Naive thymus-derived CD4-positive, alpha-beta T cell (primary cell): ENCODE measurements at regions of chr6 and their contacts with region 1.

Region 1: DNA sequence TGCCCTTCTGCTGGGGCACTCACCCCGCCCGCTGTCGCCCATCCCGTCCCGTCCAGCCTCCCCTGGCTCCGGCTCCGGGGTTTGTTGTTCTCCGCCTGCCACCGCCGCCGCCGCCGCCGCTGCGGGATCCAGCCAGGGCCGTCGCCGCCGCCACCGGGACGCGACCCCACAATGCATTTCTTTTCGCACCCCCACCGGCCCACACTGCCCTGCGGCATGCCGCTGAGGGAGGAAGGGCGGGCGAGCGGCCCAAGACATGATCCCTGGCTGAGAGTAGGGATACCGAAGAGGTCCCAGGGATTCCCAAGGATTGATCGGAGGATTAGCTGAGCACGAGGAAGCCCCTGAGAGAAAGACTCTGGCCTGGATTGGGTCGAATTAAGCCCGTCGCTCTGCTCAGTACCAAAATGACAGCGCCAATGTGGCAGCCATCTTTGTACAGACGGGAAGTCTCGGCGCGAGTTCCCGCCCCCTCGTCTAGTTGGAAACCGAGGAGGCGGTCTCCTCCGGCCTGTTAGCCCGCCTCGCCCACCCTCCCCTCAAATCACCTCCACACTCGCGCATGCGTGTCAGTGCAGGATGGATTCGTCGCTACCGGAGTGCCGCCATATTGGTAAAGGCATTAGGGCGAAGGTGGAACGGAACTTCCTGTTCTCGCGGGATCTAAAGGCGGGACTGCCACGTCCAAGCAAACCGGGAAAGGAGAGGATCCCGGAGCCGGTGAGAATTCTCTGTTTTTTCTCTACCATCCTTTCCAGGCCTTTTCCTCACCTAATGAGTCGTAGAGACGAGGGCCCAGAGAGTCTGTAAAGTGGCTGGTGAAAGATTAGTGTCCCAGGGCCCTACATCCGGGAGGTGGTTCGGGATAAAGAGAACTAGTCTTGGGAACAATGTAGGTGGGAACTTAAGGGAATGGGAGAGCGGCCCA is at the starts of genes RXRB and SLC39A7:
- DNase-seq: peak; percentile 88 to 99 (median 97)
- ATAC-seq: peak; percentile 85
- H3K4me3 ChIP-seq: peak within 1 kb of the TSS; percentile 89
- H3K4me3 Mint-ChIP-seq: peak within 1 kb of the TSS; percentile 95 to 100 (median 99)
- H3K27ac ChIP-seq: peak within 1 kb of the TSS; percentile 96
- H3K27ac Mint-ChIP-seq: peak within 1 kb of the TSS; percentile 97 to 99 (median 99)
- H3K4me1 ChIP-seq: peaks cover 32 to 37% of the 10 kb centered on the region in 2 donors
- H3K4me1 Mint-ChIP-seq: peaks cover 62 to 84% (median 73%) of the 10 kb centered on the region in 7 donors
- H3K27me3 ChIP-seq: no peaks in the 10 kb centered on the region
- H3K27me3 Mint-ChIP-seq: no peaks in the 10 kb centered on the region
- total RNA-seq, gene RXRB: 50.3 to 103 (median 76.2) TPM
- total RNA-seq, gene SLC39A7: 19.1 to 51.9 (median 27.9) TPM

Region 2: DNA sequence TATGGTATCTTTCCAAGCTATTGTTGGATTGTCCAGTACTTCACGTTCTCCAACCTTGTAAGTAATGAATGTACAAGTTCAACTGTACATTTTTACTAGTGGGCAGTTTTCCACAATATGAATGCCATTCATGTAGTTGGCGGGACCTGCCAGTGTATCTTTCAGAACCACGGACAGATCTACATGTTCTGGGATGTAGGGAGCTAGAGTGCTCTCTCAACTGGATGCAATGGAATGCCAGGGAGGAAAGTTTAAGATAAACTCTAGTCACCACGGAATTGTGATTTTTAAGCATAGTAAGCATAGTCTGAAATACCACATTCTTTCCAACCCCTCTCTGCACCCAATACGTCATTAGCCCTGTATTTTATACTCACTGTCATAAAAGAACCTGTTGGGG is 1907.1 kb before region 1 on chr6:
- CTCF ChIA-PET with region 1: no interaction called
- POLR2A ChIA-PET with region 1: no interaction called
- intact Hi-C with region 1: no loop called
- DNase-seq: no peak
- ATAC-seq: no peak
- H3K4me3 ChIP-seq: no peak overlapping the region
- H3K4me3 Mint-ChIP-seq: no peak overlapping the region
- H3K27ac ChIP-seq: no peak overlapping the region
- H3K27ac Mint-ChIP-seq: no peak overlapping the region
- H3K4me1 ChIP-seq: no peaks in the 10 kb centered on the region
- H3K4me1 Mint-ChIP-seq: peaks cover 0 to 8% (median 3%) of the 10 kb centered on the region in 7 donors
- H3K27me3 ChIP-seq: no peaks in the 10 kb centered on the region
- H3K27me3 Mint-ChIP-seq: peaks cover 0 to 50% (median 20%) of the 10 kb centered on the region in 5 donors

Region 3: GRCh38 chr6:31665501-31666336 is 1534.8 kb before region 1 on chr6 and contains the start of gene CSNK2B:
- CTCF ChIA-PET with region 1: no interaction called
- POLR2A ChIA-PET with region 1: interaction called, 3 read pairs
- intact Hi-C with region 1: loop called in 1 of 2 experiments (anchors 10 kb)
- DNase-seq: peak; percentile 87 to 99 (median 98)
- ATAC-seq: peak; percentile 94
- H3K4me3 ChIP-seq: peak within 1 kb of the TSS; percentile 91
- H3K4me3 Mint-ChIP-seq: peak within 1 kb of the TSS; percentile 93 to 99 (median 96)
- H3K27ac ChIP-seq: peak within 1 kb of the TSS; percentile 97
- H3K27ac Mint-ChIP-seq: peak within 1 kb of the TSS; percentile 94 to 99 (median 98)
- H3K4me1 ChIP-seq: peaks cover 33 to 43% of the 10 kb centered on the region in 2 donors
- H3K4me1 Mint-ChIP-seq: peaks cover 25 to 75% (median 64%) of the 10 kb centered on the region in 7 donors
- H3K27me3 ChIP-seq: no peaks in the 10 kb centered on the region
- H3K27me3 Mint-ChIP-seq: peaks cover 0 to 2% (median 0%) of the 10 kb centered on the region in 5 donors
- total RNA-seq, gene CSNK2B: 101 to 215 (median 133) TPM

Region 4: DNA sequence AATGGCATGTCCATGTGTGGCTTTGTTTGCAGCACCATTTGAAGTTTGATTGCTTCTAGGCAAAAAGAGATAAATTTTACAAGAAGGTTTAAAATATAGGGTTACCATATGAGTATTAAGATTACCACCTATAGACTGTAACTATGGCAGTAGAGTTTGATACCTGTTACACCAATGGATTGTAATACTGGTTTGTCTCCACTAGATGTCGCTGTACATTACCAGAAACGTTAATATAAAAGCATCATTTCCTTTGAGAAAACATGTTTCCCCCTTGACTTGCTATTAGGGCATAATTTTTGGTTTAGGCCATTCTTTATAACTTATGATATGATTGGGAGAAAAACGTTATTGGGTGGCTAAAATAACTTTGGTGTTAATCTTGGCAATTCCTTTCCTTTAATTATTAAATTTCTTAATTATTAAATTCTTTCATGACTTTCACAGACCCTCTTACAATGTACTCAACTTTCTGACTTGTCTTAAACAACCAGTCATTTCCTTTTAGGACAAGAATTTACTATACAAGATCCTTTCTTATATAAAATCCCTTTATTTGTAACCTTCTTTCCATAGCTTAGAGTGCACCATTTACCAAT is 81.9 kb before region 1 on chr6:
- CTCF ChIA-PET with region 1: interaction called, 3 read pairs
- POLR2A ChIA-PET with region 1: no interaction called
- intact Hi-C with region 1: loop called (anchors 1 to 5 kb)
- DNase-seq: peak in 7 of 9 donors; percentile 44 to 75 (median 65)
- ATAC-seq: peak; percentile 85
- H3K4me3 ChIP-seq: no peak overlapping the region
- H3K4me3 Mint-ChIP-seq: peak overlapping the region in 1 of 10 donors; percentile 12
- H3K27ac ChIP-seq: no peak overlapping the region
- H3K27ac Mint-ChIP-seq: no peak overlapping the region
- H3K4me1 ChIP-seq: peaks cover 0 to 4% of the 10 kb centered on the region in 2 donors
- H3K4me1 Mint-ChIP-seq: peaks cover 4 to 21% (median 13%) of the 10 kb centered on the region in 7 donors
- H3K27me3 ChIP-seq: peaks cover 0 to 12% of the 10 kb centered on the region in 2 donors
- H3K27me3 Mint-ChIP-seq: peaks cover 40 to 79% (median 45%) of the 10 kb centered on the region in 5 donors

Region 5: DNA sequence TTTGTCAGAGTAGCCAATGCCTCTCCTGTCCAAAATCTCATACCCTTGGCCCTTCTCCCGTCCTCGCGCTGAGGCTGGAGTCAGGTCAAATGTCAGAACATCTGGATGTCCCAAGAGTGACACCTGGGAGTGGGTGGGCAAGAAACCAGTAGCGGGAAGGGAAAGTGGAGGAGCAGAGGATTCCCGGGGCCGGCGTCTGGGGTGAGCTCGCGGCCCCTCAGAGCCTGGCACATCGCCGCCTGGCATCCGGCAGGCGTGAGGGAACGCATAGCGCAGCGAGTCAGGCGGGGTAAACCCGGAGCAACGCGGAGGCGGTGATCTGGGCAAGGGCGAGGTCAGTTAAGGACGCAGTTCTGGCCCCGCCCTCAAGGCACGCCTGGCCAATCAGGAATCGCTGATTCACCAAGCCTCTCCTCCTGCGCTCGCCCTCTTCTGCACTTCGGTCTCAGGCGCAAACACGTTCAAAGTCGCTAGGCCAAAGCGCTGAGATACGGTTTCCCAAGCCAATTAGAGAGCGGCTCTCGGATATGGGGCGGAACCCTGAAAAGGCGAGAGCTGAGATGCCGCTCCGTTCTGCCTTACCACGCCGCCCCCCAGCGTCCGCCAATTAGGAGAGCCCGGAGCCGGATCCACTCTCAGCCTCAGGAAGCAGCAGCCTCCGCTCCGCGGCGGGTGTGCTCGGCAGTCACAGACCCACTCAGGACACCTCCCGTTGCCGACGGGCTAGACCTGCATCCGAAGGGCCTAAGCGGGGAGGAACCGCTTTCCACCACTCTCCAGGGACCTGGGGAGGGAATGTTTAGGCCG is 48.6 kb after region 1 on chr6:
- CTCF ChIA-PET with region 1: interaction called, 6 read pairs
- POLR2A ChIA-PET with region 1: interaction called, 14 read pairs
- intact Hi-C with region 1: loop called (anchors 1 kb)
- DNase-seq: peak; percentile 79 to 97 (median 94)
- ATAC-seq: peak; percentile 91
- H3K4me3 ChIP-seq: peak overlapping the region; percentile 81
- H3K4me3 Mint-ChIP-seq: peak overlapping the region; percentile 81 to 94 (median 90)
- H3K27ac ChIP-seq: peak overlapping the region; percentile 96
- H3K27ac Mint-ChIP-seq: peak overlapping the region; percentile 82 to 98 (median 94)
- H3K4me1 ChIP-seq: peaks cover 11 to 15% of the 10 kb centered on the region in 2 donors
- H3K4me1 Mint-ChIP-seq: peaks cover 26 to 43% (median 35%) of the 10 kb centered on the region in 7 donors
- H3K27me3 ChIP-seq: no peaks in the 10 kb centered on the region
- H3K27me3 Mint-ChIP-seq: peaks cover 0 to 4% (median 0%) of the 10 kb centered on the region in 5 donors

Region 6: GRCh38 chr6:33317669-33318425 is 117.4 kb after region 1 on chr6 and contains the start of gene ZBTB22:
- CTCF ChIA-PET with region 1: no interaction called
- POLR2A ChIA-PET with region 1: interaction called, 3 read pairs
- intact Hi-C with region 1: loop called in 1 of 2 experiments (anchors 1 kb)
- DNase-seq: peak; percentile 87 to 97 (median 96)
- ATAC-seq: peak; percentile 73
- H3K4me3 ChIP-seq: peak within 1 kb of the TSS; percentile 97
- H3K4me3 Mint-ChIP-seq: peak within 1 kb of the TSS; percentile 81 to 100 (median 100)
- H3K27ac ChIP-seq: peak within 1 kb of the TSS; percentile 99
- H3K27ac Mint-ChIP-seq: peak within 1 kb of the TSS; percentile 97 to 99 (median 98)
- H3K4me1 ChIP-seq: peaks cover 59 to 62% of the 10 kb centered on the region in 2 donors
- H3K4me1 Mint-ChIP-seq: peaks cover 53 to 85% (median 75%) of the 10 kb centered on the region in 7 donors
- H3K27me3 ChIP-seq: no peaks in the 10 kb centered on the region
- H3K27me3 Mint-ChIP-seq: peaks cover 0 to 2% (median 0%) of the 10 kb centered on the region in 5 donors
- total RNA-seq, gene ZBTB22: 15.5 to 30.1 (median 20.5) TPM

Region 7: GRCh38 chr6:33417903-33418689 is 217.6 kb after region 1 on chr6 and contains the start of gene CUTA:
- CTCF ChIA-PET with region 1: no interaction called
- POLR2A ChIA-PET with region 1: no interaction called
- intact Hi-C with region 1: loop called (anchors 1 to 2 kb)
- DNase-seq: peak; percentile 91 to 100 (median 99)
- ATAC-seq: peak; percentile 92
- H3K4me3 ChIP-seq: peak within 1 kb of the TSS; percentile 74
- H3K4me3 Mint-ChIP-seq: peak within 1 kb of the TSS; percentile 88 to 97 (median 94)
- H3K27ac ChIP-seq: peak within 1 kb of the TSS; percentile 94
- H3K27ac Mint-ChIP-seq: peak within 1 kb of the TSS; percentile 98 to 100 (median 99)
- H3K4me1 ChIP-seq: peaks cover 31 to 54% of the 10 kb centered on the region in 2 donors
- H3K4me1 Mint-ChIP-seq: peaks cover 60 to 89% (median 73%) of the 10 kb centered on the region in 7 donors
- H3K27me3 ChIP-seq: no peaks in the 10 kb centered on the region
- H3K27me3 Mint-ChIP-seq: no peaks in the 10 kb centered on the region
- total RNA-seq, gene CUTA: 148 to 235 (median 158) TPM

Region 8: DNA sequence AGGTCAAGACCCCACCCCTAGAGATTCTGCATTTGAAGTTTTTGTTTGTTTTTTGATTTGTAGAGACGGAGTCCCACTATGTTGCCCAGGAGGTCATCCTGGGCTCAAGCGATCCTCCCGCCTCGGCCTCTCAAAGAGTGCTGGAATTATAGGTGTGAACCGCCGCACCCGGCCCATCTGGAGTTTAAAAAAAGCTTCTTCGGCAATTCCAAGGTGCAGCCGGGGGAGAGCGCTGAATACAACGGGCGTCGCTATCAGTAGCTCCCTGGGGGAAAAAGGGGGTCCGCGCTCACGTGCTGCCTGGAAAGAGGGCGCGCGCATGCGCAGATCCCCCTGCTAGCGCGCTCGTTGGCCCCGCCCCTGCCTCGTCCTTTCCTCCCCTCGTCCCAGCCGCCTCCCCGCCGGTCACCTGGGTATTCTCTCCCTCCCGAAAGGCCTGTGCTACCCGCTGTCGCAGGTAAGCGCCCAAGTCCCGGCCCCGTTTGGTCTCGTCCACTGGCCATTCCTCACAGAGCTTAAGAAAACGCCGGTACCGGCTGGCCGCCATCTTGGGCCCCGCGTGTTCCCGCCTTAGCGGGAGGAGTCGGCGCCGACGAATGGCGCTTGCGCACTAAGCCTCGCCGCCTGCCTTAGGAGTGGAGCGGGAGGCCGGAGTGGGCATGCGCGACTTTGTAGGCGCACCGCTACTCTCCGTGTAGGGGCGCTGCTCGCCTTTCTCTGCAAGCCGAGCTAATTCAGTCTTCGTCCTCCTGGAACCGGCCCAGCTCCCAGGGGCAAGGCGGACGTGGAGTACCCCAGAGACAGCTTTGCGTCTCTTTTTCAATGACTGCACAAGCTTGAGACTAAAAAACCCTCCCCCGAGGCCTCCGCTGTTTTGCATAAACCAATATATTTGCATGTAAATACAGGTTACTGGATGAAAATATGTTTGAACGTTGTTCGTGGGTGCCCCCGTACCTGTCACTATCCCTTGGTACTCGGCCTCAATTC is 511.0 kb after region 1 on chr6 and contains the start of gene UQCC2:
- CTCF ChIA-PET with region 1: no interaction called
- POLR2A ChIA-PET with region 1: no interaction called
- intact Hi-C with region 1: loop called in 1 of 2 experiments (anchors 5 kb)
- DNase-seq: peak; percentile 94 to 97 (median 97)
- ATAC-seq: peak; percentile 97
- H3K4me3 ChIP-seq: peak within 1 kb of the TSS; percentile 83
- H3K4me3 Mint-ChIP-seq: peak within 1 kb of the TSS; percentile 94 to 99 (median 98)
- H3K27ac ChIP-seq: peak within 1 kb of the TSS; percentile 91
- H3K27ac Mint-ChIP-seq: peak within 1 kb of the TSS; percentile 94 to 98 (median 98)
- H3K4me1 ChIP-seq: peaks cover 9 to 11% of the 10 kb centered on the region in 2 donors
- H3K4me1 Mint-ChIP-seq: peaks cover 22 to 46% (median 36%) of the 10 kb centered on the region in 7 donors
- H3K27me3 ChIP-seq: no peaks in the 10 kb centered on the region
- H3K27me3 Mint-ChIP-seq: peaks cover 0 to 9% (median 0%) of the 10 kb centered on the region in 5 donors
- total RNA-seq, gene UQCC2: 15.7 to 79.8 (median 23.0) TPM